AG04449 (cell line): ENCODE measurements at regions of chr3 and their contacts with region 1.

Region 1: GRCh38 chr3:39166134-39166731 is 12.8 kb upstream of the CSRNP1 start:
- DNase-seq: peak; percentile 89
- H3K4me3 ChIP-seq: no peak overlapping the region
- CTCF ChIP-seq: peak; percentile 0

Region 2: GRCh38 chr3:39180546-39181346 is 14.5 kb after region 1 on chr3:
- CTCF ChIA-PET with region 1: interaction called, 27 read pairs
- POLR2A ChIA-PET with region 1: interaction called, 11 read pairs
- DNase-seq: no peak
- H3K4me3 ChIP-seq: peak overlapping the region; percentile 44
- CTCF ChIP-seq: peak; percentile 23

Region 3: GRCh38 chr3:39299279-39299678 is 133.0 kb after region 1 on chr3:
- CTCF ChIA-PET with region 1: no interaction called
- POLR2A ChIA-PET with region 1: no interaction called
- DNase-seq: no peak
- H3K4me3 ChIP-seq: no peak overlapping the region
- CTCF ChIP-seq: no peak